ENCODE measurements at regions of chr18 and their contacts with region 1.

Region 1: DNA sequence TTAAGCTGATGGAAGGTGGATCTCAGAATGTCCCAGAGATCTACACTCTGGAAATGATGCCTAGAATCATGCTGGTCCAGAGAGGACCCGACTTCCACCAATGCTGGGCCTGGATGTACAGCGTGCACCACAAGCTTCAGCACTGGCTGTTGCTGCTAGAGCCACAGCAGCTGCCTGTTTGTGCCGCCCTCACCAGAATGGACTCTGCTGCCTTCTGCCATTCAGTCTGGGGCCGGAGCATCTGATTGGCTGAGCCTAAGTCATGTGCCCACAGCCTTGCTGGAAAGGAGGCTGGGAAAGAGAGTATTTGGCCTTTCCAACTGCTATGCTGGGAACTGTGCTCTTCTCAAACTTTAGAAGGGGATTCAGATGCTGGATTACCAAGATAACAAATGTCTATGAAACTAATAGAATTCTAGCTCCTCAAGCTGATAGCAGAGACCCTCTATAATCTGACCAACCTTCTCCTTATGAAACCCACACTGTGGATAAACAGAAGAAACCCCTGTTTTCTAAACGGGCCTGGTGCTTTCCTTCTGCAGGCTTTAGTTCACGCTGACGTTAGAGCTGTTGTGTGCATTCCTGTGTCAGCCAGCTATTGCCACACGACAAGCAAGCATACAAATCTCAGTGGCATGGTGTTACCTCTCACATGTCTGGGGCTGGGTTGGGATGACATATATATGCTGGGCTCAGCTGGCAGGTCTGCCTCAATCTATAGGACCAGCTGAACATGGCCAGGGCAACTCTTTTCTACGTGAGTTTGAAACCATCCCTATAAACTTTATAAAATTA is 4.1 kb upstream of the LOXHD1 start:
- DNase-seq: no peak
- ATAC-seq: peak; percentile 54; the same call in 1 of the 2 replicates
- H3K4me3 ChIP-seq: no peak overlapping the region
- H3K27ac ChIP-seq: no peak overlapping the region
- H3K4me1 ChIP-seq: no peaks in the 10 kb centered on the region
- H3K27me3 ChIP-seq: no peaks in the 10 kb centered on the region
- CTCF ChIP-seq: no peak
- POLR2A ChIP-seq: no peak
- RAD21 ChIP-seq: no peak

Region 2: GRCh38 chr18:46173393-46174341 is 487.5 kb before region 1 on chr18:
- CTCF ChIA-PET with region 1: interaction called, 24 read pairs
- POLR2A ChIA-PET with region 1: no interaction called
- RAD21 ChIA-PET with region 1: interaction called, 4 to 6 read pairs
- intact Hi-C with region 1: loop called (anchors 1 kb)
- DNase-seq: peak; percentile 82
- ATAC-seq: peak; percentile 92
- H3K4me3 ChIP-seq: peak overlapping the region; percentile 90 to 94
- H3K27ac ChIP-seq: peak overlapping the region; percentile 83
- H3K4me1 ChIP-seq: peaks cover 14 to 44% of the 10 kb centered on the region in 2 experiments
- H3K27me3 ChIP-seq: no peaks in the 10 kb centered on the region
- CTCF ChIP-seq: peak; percentile 83 to 95 (median 87)
- POLR2A ChIP-seq: peak; percentile 69
- RAD21 ChIP-seq: peak; percentile 70

Region 3: DNA sequence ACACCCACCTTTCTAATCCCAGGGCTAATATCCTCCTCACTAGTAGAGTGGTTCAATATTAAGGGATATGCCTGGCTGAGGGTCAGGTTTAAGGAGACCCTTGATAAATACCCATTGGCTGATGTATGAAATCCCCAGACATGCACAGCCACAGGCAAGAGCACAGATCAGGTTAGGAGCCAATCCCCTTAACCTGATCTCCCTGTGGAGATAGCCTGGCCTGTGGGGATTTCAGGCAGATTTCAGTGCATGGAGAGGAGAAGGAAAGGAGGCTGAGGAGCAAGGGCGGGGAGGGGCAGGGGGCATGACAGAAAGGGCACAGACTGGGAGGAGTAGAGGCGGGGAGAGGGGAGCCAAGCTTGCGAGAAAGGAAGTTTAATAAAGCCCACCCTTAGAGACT is 133.1 kb before region 1 on chr18:
- CTCF ChIA-PET with region 1: interaction called, 10 read pairs
- POLR2A ChIA-PET with region 1: no interaction called
- RAD21 ChIA-PET with region 1: no interaction called
- intact Hi-C with region 1: no loop called
- DNase-seq: no peak
- ATAC-seq: no peak
- H3K4me3 ChIP-seq: no peak overlapping the region
- H3K27ac ChIP-seq: no peak overlapping the region
- H3K4me1 ChIP-seq: no peaks in the 10 kb centered on the region
- H3K27me3 ChIP-seq: peaks cover 4% of the 10 kb centered on the region
- CTCF ChIP-seq: no peak
- POLR2A ChIP-seq: no peak
- RAD21 ChIP-seq: no peak

Region 4: GRCh38 chr18:46622999-46623398 is 38.2 kb before region 1 on chr18:
- CTCF ChIA-PET with region 1: interaction called, 11 read pairs
- POLR2A ChIA-PET with region 1: no interaction called
- RAD21 ChIA-PET with region 1: interaction called, 3 to 5 read pairs
- intact Hi-C with region 1: no loop called
- DNase-seq: no peak
- ATAC-seq: peak; percentile 69
- H3K4me3 ChIP-seq: no peak overlapping the region
- H3K27ac ChIP-seq: no peak overlapping the region
- H3K4me1 ChIP-seq: no peaks in the 10 kb centered on the region
- H3K27me3 ChIP-seq: peaks cover 55% of the 10 kb centered on the region
- CTCF ChIP-seq: peak in 2 of 3 experiments; percentile 31 to 32; a peak in 3 of 6 replicates
- POLR2A ChIP-seq: no peak
- RAD21 ChIP-seq: peak; percentile 58

Region 5: DNA sequence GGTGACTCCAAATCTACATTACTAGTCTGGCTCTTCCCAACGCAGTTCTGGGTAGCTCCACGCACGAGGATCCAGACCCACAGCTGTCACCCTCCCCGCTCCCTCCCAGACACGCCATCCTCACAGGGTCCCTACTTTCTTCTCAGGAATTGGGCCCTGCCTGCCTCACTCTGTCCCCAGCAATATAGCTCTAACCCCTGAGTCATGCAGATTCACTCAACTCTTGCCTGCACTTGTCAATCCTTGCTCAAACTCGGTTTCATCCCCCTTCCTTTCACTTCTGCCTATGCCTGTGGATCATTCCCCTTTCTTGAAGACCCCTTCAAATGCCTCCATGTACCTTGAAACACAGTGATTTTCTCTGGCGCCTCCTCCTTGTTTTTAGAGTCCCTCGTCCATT is 90.7 kb after region 1 on chr18:
- CTCF ChIA-PET with region 1: no interaction called
- POLR2A ChIA-PET with region 1: no interaction called
- RAD21 ChIA-PET with region 1: no interaction called
- intact Hi-C with region 1: no loop called
- DNase-seq: no peak
- ATAC-seq: no peak
- H3K4me3 ChIP-seq: no peak overlapping the region
- H3K27ac ChIP-seq: no peak overlapping the region
- H3K4me1 ChIP-seq: no peaks in the 10 kb centered on the region
- H3K27me3 ChIP-seq: no peaks in the 10 kb centered on the region
- CTCF ChIP-seq: no peak
- POLR2A ChIP-seq: no peak
- RAD21 ChIP-seq: no peak